CD8-positive, alpha-beta T cell (primary cell): ENCODE measurements at regions of chr3 and their contacts with region 1.

Region 1: DNA sequence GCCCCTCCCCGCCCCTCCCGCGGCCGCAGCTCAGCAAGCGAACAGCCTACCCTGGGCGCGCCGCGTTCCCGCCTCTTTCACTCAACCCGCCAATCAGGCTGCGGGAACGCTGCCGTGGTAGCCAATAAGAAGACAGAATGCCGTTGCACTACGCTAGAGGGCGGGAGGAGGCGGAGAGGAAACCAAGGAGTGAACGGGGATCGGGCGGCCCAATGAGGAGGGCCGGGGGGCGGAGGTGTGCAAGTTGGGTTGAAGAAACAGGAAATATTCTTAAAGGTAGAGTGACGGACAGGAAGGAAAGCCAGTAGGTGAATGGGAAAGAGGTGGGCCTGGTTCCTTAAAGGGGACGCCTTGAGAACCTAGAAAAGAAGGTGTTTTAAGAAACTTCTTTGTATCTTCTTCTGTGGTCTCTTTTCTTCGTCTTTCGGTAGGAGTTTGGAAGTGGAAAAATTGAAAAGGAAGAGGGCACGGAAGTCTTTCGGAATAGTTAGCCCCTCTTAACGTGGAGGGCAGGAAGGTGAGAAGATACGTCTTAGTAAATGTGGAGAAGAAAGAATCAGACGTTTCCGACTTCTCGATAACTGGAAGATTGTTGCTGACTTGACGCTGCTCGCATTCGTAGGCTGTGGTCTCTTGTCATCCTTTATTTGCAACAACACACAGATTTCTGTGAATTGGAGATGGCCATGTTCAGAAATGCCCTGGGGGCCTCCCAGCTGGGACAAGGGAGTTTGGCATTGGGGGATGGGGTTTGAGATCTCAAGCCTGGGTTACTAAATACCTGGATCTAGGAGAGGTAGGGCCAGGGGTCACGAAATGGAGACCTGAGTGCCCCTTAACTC is 437 bp upstream of the USF3 start:
- DNase-seq: peak; percentile 96 to 100 (median 99)
- ATAC-seq: peak; percentile 84
- H3K4me3 ChIP-seq: peak overlapping the region; percentile 69 to 86
- H3K4me3 Mint-ChIP-seq: no peak overlapping the region
- H3K27ac ChIP-seq: peak overlapping the region; percentile 88 to 89
- H3K27ac Mint-ChIP-seq: no peak overlapping the region
- H3K4me1 ChIP-seq: peaks cover 32% of the 10 kb centered on the region
- H3K4me1 Mint-ChIP-seq: peaks cover 28% of the 10 kb centered on the region
- H3K27me3 ChIP-seq: no peaks in the 10 kb centered on the region
- H3K27me3 Mint-ChIP-seq: no peaks in the 10 kb centered on the region
- CTCF ChIP-seq: no peak

Region 2: DNA sequence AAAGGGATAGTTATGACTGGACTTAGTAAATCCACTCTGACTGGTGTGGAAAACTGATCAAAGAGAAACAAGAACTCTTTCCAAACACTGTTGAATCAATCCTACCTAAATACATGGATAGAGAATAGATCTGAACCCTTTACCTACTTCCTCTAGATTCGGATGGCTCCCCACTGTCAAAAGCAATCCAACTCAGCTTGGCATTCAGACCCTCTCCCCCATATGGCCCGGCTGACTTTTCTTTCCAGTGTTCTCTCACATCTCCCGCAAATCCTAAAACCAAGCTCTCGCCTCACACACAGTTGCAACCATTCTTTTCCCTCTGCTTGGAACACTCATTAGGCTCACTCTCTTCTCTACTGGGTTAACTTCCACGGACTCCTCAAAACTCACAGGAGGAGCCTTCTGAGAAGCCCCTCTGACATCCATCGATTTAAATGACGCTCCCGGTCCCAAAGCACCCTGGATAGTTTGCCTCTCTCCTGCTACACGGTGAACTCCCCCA is 182.6 kb before region 1 on chr3:
- CTCF ChIA-PET with region 1: no interaction called
- POLR2A ChIA-PET with region 1: interaction called, 12 read pairs
- intact Hi-C with region 1: loop called (anchors 1 to 2 kb)
- DNase-seq: no peak
- ATAC-seq: no peak
- H3K4me3 ChIP-seq: peak overlapping the region; percentile 82 to 96
- H3K4me3 Mint-ChIP-seq: no peak overlapping the region
- H3K27ac ChIP-seq: peak overlapping the region; percentile 89 to 91
- H3K27ac Mint-ChIP-seq: no peak overlapping the region
- H3K4me1 ChIP-seq: peaks cover 10% of the 10 kb centered on the region
- H3K4me1 Mint-ChIP-seq: peaks cover 18% of the 10 kb centered on the region
- H3K27me3 ChIP-seq: no peaks in the 10 kb centered on the region
- H3K27me3 Mint-ChIP-seq: peaks cover 3% of the 10 kb centered on the region
- CTCF ChIP-seq: no peak

Region 3: GRCh38 chr3:113838631-113839209 is 141.8 kb after region 1 on chr3 and contains the start of gene GRAMD1C:
- CTCF ChIA-PET with region 1: no interaction called
- POLR2A ChIA-PET with region 1: no interaction called
- intact Hi-C with region 1: loop called in 1 of 2 experiments (anchors 2 kb)
- DNase-seq: peak; percentile 65 to 93 (median 85)
- ATAC-seq: peak; percentile 99
- H3K4me3 ChIP-seq: peak within 1 kb of the TSS; percentile 47 to 53
- H3K4me3 Mint-ChIP-seq: peak within 1 kb of the TSS; percentile 80
- H3K27ac ChIP-seq: no peak within 1 kb of the TSS
- H3K27ac Mint-ChIP-seq: no peak within 1 kb of the TSS
- H3K4me1 ChIP-seq: no peaks in the 10 kb centered on the region
- H3K4me1 Mint-ChIP-seq: peaks cover 9% of the 10 kb centered on the region
- H3K27me3 ChIP-seq: no peaks in the 10 kb centered on the region
- H3K27me3 Mint-ChIP-seq: no peaks in the 10 kb centered on the region
- CTCF ChIP-seq: peak; percentile 81
- total RNA-seq, gene GRAMD1C: 0.65 to 1.00 TPM

Region 4: DNA sequence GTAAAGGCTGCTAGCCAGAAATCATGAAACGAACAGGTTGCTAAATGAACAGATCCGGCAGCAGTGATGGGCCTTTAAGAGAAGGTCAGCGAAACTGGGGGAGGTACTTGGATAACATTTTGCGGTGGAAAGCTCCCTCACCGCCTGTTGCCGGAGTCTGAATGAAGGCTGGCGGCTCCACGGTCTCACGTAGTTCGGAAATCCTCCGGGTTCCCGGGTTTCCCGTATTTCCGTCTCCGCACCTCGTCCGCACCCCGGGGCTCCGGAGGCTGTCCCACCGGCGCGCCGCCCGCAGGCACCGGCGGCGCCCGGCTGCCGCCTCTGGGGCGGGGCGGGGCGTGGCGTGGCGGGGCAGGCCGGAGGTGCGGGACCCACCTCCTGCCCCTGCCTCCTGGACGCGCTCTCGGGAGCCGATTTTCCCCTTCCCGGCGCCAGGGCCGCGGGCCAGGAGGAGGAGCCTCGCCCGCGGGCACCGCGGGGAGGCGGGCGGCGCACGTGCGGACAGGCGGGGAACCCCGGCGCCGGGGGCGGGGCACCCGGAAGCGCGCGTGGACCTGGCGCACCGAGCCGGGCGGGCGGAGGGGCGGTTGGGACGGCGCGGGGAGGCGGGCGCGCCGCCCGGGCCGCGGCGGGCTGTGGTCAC is 250.6 kb after region 1 on chr3 and contains the start of gene ZDHHC23:
- CTCF ChIA-PET with region 1: no interaction called
- POLR2A ChIA-PET with region 1: no interaction called
- intact Hi-C with region 1: loop called (anchors 2 to 5 kb)
- DNase-seq: peak; percentile 21 to 88 (median 63)
- ATAC-seq: peak; percentile 87
- H3K4me3 ChIP-seq: peak within 1 kb of the TSS; percentile 74 to 85
- H3K4me3 Mint-ChIP-seq: peak within 1 kb of the TSS; percentile 86
- H3K27ac ChIP-seq: no peak within 1 kb of the TSS
- H3K27ac Mint-ChIP-seq: peak within 1 kb of the TSS; percentile 84
- H3K4me1 ChIP-seq: peaks cover 8% of the 10 kb centered on the region
- H3K4me1 Mint-ChIP-seq: peaks cover 10% of the 10 kb centered on the region
- H3K27me3 ChIP-seq: no peaks in the 10 kb centered on the region
- H3K27me3 Mint-ChIP-seq: peaks cover 21% of the 10 kb centered on the region
- CTCF ChIP-seq: no peak
- total RNA-seq, gene ZDHHC23: 2.1 to 4.7 TPM

Region 5: DNA sequence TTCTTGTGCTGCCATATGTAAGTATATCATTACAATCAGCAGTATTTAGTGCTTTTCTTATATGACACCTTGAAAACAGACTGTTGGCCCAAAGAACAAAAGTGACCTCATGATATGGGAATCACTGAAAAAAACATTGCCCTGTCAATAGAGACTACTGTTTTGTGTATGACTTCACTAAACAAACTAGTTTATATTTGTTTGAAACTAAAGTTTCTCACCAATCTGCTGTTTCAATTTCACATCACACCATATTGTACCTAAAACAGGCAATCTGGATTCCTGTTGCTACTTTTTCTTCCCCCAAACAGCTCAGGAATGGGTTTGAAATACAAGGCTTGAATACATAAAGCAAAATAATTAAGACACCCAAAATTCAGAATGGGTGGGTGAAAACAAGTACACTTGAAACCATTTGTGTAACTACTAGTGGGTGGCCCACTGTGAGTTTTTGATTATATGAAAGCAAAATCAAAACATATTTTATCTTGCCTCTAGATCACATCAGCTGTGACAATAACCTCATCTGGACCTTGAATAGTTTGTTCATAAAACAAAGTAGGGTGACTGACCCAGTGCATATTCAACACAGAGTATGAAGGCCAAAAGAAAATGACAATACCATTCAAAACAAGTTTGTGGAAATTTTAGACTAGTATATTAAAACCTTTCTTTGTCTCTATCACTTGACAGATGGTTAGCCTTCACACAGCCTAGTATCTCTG is 1444.3 kb after region 1 on chr3:
- CTCF ChIA-PET with region 1: no interaction called
- POLR2A ChIA-PET with region 1: no interaction called
- intact Hi-C with region 1: loop called in 1 of 2 experiments (anchors 5 kb)
- DNase-seq: no peak
- ATAC-seq: no peak
- H3K4me3 ChIP-seq: no peak overlapping the region
- H3K4me3 Mint-ChIP-seq: no peak overlapping the region
- H3K27ac ChIP-seq: no peak overlapping the region
- H3K27ac Mint-ChIP-seq: no peak overlapping the region
- H3K4me1 ChIP-seq: peaks cover 5% of the 10 kb centered on the region
- H3K4me1 Mint-ChIP-seq: peaks cover 53% of the 10 kb centered on the region
- H3K27me3 ChIP-seq: no peaks in the 10 kb centered on the region
- H3K27me3 Mint-ChIP-seq: no peaks in the 10 kb centered on the region
- CTCF ChIP-seq: no peak